ENCODE measurements at regions of chr6 and their contacts with region 1.

Region 1: GRCh38 chr6:42873313-42873712 is 6.1 kb upstream of the RPL7L1 start:
- DNase-seq: no peak
- H3K4me3 ChIP-seq: no peak overlapping the region
- H3K27ac ChIP-seq: no peak overlapping the region
- H3K4me1 ChIP-seq: no peaks in the 10 kb centered on the region
- H3K27me3 ChIP-seq: no peaks in the 10 kb centered on the region
- CTCF ChIP-seq: no peak
- POLR2A ChIP-seq: no peak

Region 2: GRCh38 chr6:42661540-42662153 is 211.7 kb before region 1 on chr6:
- CTCF ChIA-PET with region 1: interaction called, 49 read pairs
- POLR2A ChIA-PET with region 1: no interaction called
- dilution Hi-C with region 1: no loop called
- intact Hi-C with region 1: loop called (anchors 1 kb)
- DNase-seq: peak; percentile 73
- H3K4me3 ChIP-seq: no peak overlapping the region
- H3K27ac ChIP-seq: no peak overlapping the region
- H3K4me1 ChIP-seq: no peaks in the 10 kb centered on the region
- H3K27me3 ChIP-seq: no peaks in the 10 kb centered on the region
- CTCF ChIP-seq: peak; percentile 71 to 75
- POLR2A ChIP-seq: no peak

Region 3: DNA sequence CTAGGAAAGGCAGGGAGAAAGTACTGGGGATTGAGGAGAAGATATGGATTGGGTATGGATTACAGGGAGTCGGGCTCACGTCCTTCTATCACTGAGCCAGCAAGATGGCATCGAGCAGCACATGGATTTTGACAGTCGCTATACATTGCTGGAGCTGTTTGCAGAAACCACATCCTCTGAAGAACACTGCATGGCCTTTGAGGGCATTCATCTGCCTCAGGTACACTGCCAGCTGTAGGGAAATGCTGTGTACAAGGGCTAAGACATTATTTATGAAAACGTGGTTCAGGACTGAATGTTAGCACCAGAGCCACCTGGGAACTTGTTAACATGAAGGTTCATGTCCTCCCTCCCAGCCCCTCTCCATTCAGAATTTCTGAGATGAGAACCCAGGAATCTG is 312.1 kb after region 1 on chr6:
- CTCF ChIA-PET with region 1: no interaction called
- POLR2A ChIA-PET with region 1: no interaction called
- dilution Hi-C with region 1: no loop called
- intact Hi-C with region 1: no loop called
- DNase-seq: no peak
- H3K4me3 ChIP-seq: no peak overlapping the region
- H3K27ac ChIP-seq: no peak overlapping the region
- H3K4me1 ChIP-seq: peaks cover 17% of the 10 kb centered on the region
- H3K27me3 ChIP-seq: no peaks in the 10 kb centered on the region
- CTCF ChIP-seq: no peak
- POLR2A ChIP-seq: no peak

Measured in endothelial cell of umbilical vein (primary cell).